Right cardiac atrium (tissue), 5 donors: ENCODE measurements at regions of chr10 and their contacts with region 1.

Region 1: GRCh38 chr10:76778914-76779795 is 858.5 kb downstream of the KCNMA1 start:
- DNase-seq: no peak
- ATAC-seq: no peak
- H3K4me3 ChIP-seq: no peak overlapping the region
- H3K27ac ChIP-seq: no peak overlapping the region
- H3K4me1 ChIP-seq: peaks cover 1% of the 10 kb centered on the region
- H3K27me3 ChIP-seq: no peaks in the 10 kb centered on the region

Region 2: DNA sequence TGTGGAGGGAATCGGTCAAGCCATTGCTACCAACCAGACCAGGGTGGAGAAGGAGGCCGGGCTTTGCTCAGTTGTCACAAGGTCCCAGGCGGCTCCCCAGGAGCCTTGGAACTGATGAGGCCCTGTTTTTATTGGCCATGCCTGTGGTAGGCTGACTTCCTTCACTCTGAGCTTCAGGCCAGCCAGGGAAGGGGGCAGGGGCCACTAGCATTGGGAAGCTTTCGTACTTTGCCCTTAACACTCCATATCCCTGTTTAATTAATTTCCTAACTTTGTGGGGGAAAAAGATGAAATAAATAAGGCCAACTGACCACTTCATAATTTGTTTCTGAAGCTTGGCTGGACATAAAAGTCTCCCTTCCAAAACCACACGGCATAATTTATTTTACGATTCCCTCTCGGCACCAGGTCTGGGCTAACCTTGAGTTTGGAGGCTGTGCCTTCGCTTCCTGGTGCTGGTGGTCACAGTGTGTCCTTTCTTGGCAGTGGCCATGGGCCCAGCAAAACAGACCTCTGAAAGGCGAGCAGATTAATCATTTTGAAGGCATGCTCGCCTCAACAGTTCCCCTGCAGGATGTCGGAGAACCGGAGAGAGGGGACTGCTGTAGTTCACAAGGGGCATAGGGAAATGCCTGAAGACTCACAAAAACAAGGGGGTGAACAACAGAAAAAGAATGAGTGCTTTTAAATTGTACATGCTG is 381.8 kb before region 1 on chr10:
- intact Hi-C with region 1: no loop called
- DNase-seq: peak; percentile 59 to 81 (median 80)
- ATAC-seq: peak; percentile 85 to 97
- H3K4me3 ChIP-seq: no peak overlapping the region
- H3K27ac ChIP-seq: peak overlapping the region; percentile 82
- H3K4me1 ChIP-seq: peaks cover 11% of the 10 kb centered on the region
- H3K27me3 ChIP-seq: no peaks in the 10 kb centered on the region

Region 3: GRCh38 chr10:76576276-76576962 is 202.7 kb before region 1 on chr10:
- intact Hi-C with region 1: loop called in 1 of 4 experiments (anchors 10 kb)
- DNase-seq: peak in 1 of 3 donors; percentile 54
- ATAC-seq: peak; percentile 84 to 88
- H3K4me3 ChIP-seq: no peak overlapping the region
- H3K27ac ChIP-seq: peak overlapping the region; percentile 89
- H3K4me1 ChIP-seq: no peaks in the 10 kb centered on the region
- H3K27me3 ChIP-seq: no peaks in the 10 kb centered on the region

Region 4: GRCh38 chr10:76937181-76937600 is 158.0 kb after region 1 on chr10:
- intact Hi-C with region 1: no loop called
- DNase-seq: no peak
- ATAC-seq: no peak
- H3K4me3 ChIP-seq: no peak overlapping the region
- H3K27ac ChIP-seq: no peak overlapping the region
- H3K4me1 ChIP-seq: no peaks in the 10 kb centered on the region
- H3K27me3 ChIP-seq: no peaks in the 10 kb centered on the region